IMR-90 (cell line): ENCODE measurements at regions of chr3 and their contacts with region 1.

Region 1: GRCh38 chr3:55721716-55722484 is 234.8 kb upstream of the WNT5A start:
- DNase-seq: peak; percentile 51
- ATAC-seq: peak; percentile 76
- H3K4me3 ChIP-seq: no peak overlapping the region
- H3K27ac ChIP-seq: no peak overlapping the region
- H3K4me1 ChIP-seq: peaks cover 6% of the 10 kb centered on the region
- H3K27me3 ChIP-seq: peaks cover 6% of the 10 kb centered on the region; the same call in 1 of the 2 replicates
- CTCF ChIP-seq: peak; percentile 72
- POLR2A ChIP-seq: no peak
- RAD21 ChIP-seq: peak; percentile 83

Region 2: GRCh38 chr3:54853573-54854404 is 868.1 kb before region 1 on chr3:
- CTCF ChIA-PET with region 1: no interaction called
- POLR2A ChIA-PET with region 1: no interaction called
- dilution Hi-C with region 1: no loop called
- in situ Hi-C with region 1: no loop called
- intact Hi-C with region 1: loop called (anchors 2 kb)
- DNase-seq: peak; percentile 74
- ATAC-seq: peak; percentile 98
- H3K4me3 ChIP-seq: no peak overlapping the region
- H3K27ac ChIP-seq: peak overlapping the region; percentile 79
- H3K4me1 ChIP-seq: peaks cover 8% of the 10 kb centered on the region
- H3K27me3 ChIP-seq: peaks cover 5% of the 10 kb centered on the region; the same call in 1 of the 2 replicates
- CTCF ChIP-seq: peak; percentile 83
- POLR2A ChIP-seq: no peak
- RAD21 ChIP-seq: peak; percentile 93

Region 3: GRCh38 chr3:54939557-54940300 is 782.2 kb before region 1 on chr3:
- CTCF ChIA-PET with region 1: no interaction called
- POLR2A ChIA-PET with region 1: no interaction called
- dilution Hi-C with region 1: no loop called
- in situ Hi-C with region 1: loop called (anchors 10 kb)
- intact Hi-C with region 1: no loop called
- DNase-seq: peak; percentile 60
- ATAC-seq: peak; percentile 62
- H3K4me3 ChIP-seq: no peak overlapping the region
- H3K27ac ChIP-seq: no peak overlapping the region
- H3K4me1 ChIP-seq: no peaks in the 10 kb centered on the region
- H3K27me3 ChIP-seq: no peaks in the 10 kb centered on the region; the same call in 1 of the 2 replicates
- CTCF ChIP-seq: no peak
- POLR2A ChIP-seq: no peak
- RAD21 ChIP-seq: no peak

Region 4: DNA sequence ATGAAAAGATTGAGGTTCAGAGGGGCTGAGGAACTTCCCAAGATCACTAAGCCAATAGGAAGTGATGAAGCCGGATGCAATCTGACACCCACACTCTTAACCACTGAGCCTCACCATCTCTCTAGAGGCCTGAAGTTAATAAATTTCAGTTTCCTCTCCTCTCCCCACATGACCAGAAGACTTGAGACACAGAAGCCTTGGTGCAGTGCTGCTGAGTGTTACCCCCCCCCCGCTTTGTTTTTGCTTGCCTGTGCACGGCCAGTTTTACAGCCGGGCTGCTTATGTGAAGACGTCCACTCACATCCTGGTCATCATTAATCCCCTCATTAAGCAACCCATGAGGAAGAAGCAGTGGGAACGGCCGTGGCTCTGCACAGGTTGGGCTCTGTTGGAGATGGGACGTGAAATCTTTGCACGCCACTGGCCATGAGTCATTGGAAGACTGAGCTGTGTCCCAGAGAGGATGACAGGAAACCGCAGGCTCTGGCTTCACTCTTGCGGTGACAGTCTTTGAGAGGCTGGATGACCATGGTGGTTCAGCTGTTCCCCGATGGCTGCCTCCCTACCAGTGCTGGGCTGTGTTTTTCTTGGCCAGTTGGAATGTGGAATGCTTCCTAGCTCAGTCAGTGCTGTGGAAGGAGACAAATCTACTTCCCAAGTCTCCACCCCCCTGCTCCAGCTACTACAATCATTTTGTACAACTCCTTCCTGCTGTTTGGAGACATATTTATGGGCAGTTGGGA is 561.5 kb before region 1 on chr3:
- CTCF ChIA-PET with region 1: no interaction called
- POLR2A ChIA-PET with region 1: interaction called, 3 read pairs
- dilution Hi-C with region 1: no loop called
- in situ Hi-C with region 1: loop called (anchors 10 kb)
- intact Hi-C with region 1: loop called (anchors 1 kb)
- DNase-seq: peak; percentile 100
- ATAC-seq: peak; percentile 86
- H3K4me3 ChIP-seq: no peak overlapping the region
- H3K27ac ChIP-seq: peak overlapping the region; percentile 88
- H3K4me1 ChIP-seq: peaks cover 21% of the 10 kb centered on the region
- H3K27me3 ChIP-seq: no peaks in the 10 kb centered on the region
- CTCF ChIP-seq: no peak
- POLR2A ChIP-seq: peak; percentile 45; the same call in 1 of the 2 replicates
- RAD21 ChIP-seq: peak; percentile 36; the same call in 1 of the 2 replicates

Region 5: DNA sequence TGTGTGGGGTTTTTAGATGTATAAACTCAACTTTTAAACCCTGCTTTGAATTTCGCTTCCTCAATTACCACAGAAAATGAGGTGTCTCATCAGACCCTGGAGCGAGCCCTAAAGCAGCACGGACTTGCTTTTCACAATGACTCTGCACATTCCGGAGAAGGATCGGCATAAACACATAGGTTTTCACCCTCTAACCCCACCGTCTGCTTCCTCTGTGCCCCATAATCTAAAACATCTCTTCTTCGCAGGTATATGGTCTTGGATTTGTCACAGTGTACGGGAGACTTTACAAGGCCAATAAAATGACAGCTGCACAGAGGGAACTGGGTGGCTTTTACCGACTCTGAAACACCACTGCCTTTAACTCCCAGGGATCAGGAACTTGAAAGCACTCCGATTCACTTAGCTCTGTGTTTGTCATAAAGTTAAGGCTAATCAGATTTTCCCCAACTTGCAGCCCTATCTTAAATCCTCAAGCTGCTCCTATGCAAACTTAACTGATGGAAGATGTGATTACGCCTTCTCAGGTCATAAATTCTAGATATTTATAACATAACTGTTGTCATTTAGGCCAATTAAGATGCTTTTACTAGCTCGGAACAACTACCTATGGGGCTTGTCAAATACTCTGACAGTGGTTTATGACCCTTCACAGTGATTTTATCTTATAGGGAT is 101.4 kb before region 1 on chr3:
- CTCF ChIA-PET with region 1: no interaction called
- POLR2A ChIA-PET with region 1: no interaction called
- dilution Hi-C with region 1: no loop called
- in situ Hi-C with region 1: no loop called
- intact Hi-C with region 1: loop called (anchors 5 kb)
- DNase-seq: peak; percentile 87
- ATAC-seq: peak; percentile 49
- H3K4me3 ChIP-seq: no peak overlapping the region
- H3K27ac ChIP-seq: peak overlapping the region; percentile 80
- H3K4me1 ChIP-seq: peaks cover 15% of the 10 kb centered on the region
- H3K27me3 ChIP-seq: no peaks in the 10 kb centered on the region
- CTCF ChIP-seq: no peak
- POLR2A ChIP-seq: no peak
- RAD21 ChIP-seq: no peak

Region 6: DNA sequence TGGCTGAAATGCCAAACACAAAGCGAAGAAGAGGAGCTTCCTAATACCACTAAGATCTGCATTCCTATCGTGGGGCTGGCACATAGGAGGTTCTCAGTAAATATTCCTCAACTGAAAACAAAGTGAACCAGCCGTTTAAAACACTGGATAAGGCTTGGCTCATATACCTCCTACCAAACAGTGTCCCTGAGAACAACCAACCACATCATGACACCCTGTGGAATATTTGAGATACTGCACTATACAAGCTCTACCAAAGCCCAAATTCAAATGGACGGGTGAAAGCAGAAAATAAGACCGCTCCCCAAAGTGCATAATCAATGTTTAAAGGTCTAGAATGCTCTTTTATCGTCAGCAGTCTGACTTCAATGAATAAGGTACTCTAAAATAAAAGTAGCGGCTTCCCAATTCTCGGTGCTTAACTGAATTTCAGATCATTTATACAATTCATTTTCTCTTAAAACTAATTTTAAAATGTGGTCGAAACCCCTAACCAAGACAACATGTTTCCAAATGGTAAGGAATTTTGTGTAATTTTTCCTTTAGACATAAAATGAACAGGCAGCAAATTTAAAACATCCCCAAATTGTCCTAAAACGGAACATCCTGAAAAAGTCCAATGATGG is 320.5 kb after region 1 on chr3:
- CTCF ChIA-PET with region 1: interaction called, 4 read pairs
- POLR2A ChIA-PET with region 1: no interaction called
- dilution Hi-C with region 1: no loop called
- in situ Hi-C with region 1: no loop called
- intact Hi-C with region 1: loop called (anchors 1 kb)
- DNase-seq: peak; percentile 61
- ATAC-seq: peak; percentile 97
- H3K4me3 ChIP-seq: no peak overlapping the region
- H3K27ac ChIP-seq: no peak overlapping the region
- H3K4me1 ChIP-seq: no peaks in the 10 kb centered on the region
- H3K27me3 ChIP-seq: peaks cover 6% of the 10 kb centered on the region
- CTCF ChIP-seq: peak; percentile 58
- POLR2A ChIP-seq: no peak
- RAD21 ChIP-seq: peak; percentile 66

Region 7: DNA sequence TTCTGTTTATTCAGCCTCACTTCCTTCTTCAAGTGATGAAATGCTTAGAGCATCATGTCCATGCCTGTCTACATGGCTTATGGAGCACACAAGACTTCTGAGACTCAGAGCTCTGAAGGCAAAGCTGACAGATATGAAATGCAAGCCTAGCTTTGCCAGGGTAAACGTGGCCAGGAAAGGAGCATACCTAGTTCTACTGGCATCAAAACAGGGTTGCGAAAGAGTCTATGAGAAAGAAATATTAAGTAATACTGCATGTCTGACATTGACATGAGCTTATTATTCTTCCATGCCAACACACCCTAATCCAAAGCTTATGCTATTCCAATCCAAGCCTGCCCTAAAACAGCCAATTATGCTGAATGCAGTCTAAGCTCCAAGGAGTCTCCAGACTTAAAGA is 354.8 kb after region 1 on chr3:
- CTCF ChIA-PET with region 1: no interaction called
- POLR2A ChIA-PET with region 1: no interaction called
- dilution Hi-C with region 1: no loop called
- in situ Hi-C with region 1: no loop called
- intact Hi-C with region 1: no loop called
- DNase-seq: no peak
- ATAC-seq: no peak
- H3K4me3 ChIP-seq: no peak overlapping the region
- H3K27ac ChIP-seq: no peak overlapping the region
- H3K4me1 ChIP-seq: no peaks in the 10 kb centered on the region
- H3K27me3 ChIP-seq: peaks cover 2% of the 10 kb centered on the region; the same call in 1 of the 2 replicates
- CTCF ChIP-seq: no peak
- POLR2A ChIP-seq: no peak
- RAD21 ChIP-seq: no peak